Esophagus squamous epithelium (tissue), 5 donors: ENCODE measurements at regions of chr1 and their contacts with region 1.

Region 1: GRCh38 chr1:151130987-151131586 is 15.3 kb downstream of the SEMA6C start:
- DNase-seq: peak; percentile 39
- H3K4me3 ChIP-seq: peak overlapping the region; percentile 30 to 61 (median 49)
- H3K27ac ChIP-seq: peak overlapping the region; percentile 43 to 74 (median 64)
- H3K4me1 ChIP-seq: peaks cover 0 to 27% (median 16%) of the 10 kb centered on the region in 3 donors
- H3K27me3 ChIP-seq: no peaks in the 10 kb centered on the region
- CTCF ChIP-seq: no peak
- POLR2A ChIP-seq: peak in 2 of 4 donors; percentile 11 to 18

Region 2: DNA sequence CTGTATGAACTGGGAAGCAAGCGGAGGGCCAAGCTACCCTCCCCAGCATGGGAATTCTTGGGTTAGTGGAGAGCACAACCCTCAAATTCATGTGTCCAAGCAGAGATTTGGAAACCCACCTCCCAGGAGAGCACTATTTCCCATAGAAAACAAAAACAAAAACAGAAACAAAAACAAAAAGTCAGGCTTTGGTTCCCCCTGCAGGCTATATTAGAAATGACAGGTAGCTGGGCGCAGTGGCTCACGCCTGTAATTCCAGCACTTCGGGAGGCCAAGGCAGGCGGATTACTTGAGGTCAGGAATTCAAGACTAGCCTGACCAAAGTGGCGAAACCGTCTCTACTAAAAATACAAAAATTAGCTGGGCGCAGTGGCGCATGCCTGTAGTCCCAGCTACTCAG is 135.2 kb before region 1 on chr1:
- intact Hi-C with region 1: no loop called
- DNase-seq: no peak
- H3K4me3 ChIP-seq: peak overlapping the region in 1 of 4 donors; percentile 32
- H3K27ac ChIP-seq: peak overlapping the region in 3 of 4 donors; percentile 30 to 47 (median 40)
- H3K4me1 ChIP-seq: peaks cover 6 to 9% (median 6%) of the 10 kb centered on the region in 3 donors
- H3K27me3 ChIP-seq: no peaks in the 10 kb centered on the region
- CTCF ChIP-seq: peak; percentile 65 to 86 (median 82)
- POLR2A ChIP-seq: no peak

Region 3: DNA sequence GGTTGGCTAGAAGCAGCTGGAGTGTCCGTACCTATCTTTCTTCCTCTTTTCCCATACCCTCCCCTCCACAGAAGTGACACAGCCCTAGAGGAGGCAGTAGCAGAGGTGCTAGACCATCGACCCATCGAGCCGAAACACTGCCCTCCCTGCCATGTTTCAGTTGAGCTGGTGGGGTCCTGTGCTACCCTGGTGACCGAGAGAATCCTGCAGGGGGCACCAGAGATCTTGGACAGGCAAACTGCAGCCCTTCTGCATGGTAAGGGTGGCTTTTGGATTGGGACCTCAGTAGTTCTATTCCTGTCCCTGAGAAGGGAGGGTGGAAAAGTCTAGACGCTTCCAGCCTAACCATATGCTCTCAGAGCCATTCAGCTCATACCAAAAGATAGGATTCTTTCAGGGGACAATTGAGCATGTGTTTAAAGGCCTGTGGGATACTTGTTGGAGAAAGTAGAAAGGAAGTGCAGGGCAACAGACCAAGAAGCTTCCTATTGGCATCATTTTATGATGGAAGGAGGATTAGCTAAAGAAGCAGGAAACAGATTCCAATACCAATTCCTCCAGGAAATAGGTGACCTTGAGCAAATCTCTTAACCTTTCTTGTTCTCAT is 106.4 kb before region 1 on chr1:
- intact Hi-C with region 1: loop called (anchors 10 kb)
- DNase-seq: no peak
- H3K4me3 ChIP-seq: no peak overlapping the region
- H3K27ac ChIP-seq: peak overlapping the region in 1 of 4 donors; percentile 30
- H3K4me1 ChIP-seq: peaks cover 0 to 8% (median 3%) of the 10 kb centered on the region in 3 donors
- H3K27me3 ChIP-seq: no peaks in the 10 kb centered on the region
- CTCF ChIP-seq: peak; percentile 69 to 85 (median 76)
- POLR2A ChIP-seq: no peak

Region 4: DNA sequence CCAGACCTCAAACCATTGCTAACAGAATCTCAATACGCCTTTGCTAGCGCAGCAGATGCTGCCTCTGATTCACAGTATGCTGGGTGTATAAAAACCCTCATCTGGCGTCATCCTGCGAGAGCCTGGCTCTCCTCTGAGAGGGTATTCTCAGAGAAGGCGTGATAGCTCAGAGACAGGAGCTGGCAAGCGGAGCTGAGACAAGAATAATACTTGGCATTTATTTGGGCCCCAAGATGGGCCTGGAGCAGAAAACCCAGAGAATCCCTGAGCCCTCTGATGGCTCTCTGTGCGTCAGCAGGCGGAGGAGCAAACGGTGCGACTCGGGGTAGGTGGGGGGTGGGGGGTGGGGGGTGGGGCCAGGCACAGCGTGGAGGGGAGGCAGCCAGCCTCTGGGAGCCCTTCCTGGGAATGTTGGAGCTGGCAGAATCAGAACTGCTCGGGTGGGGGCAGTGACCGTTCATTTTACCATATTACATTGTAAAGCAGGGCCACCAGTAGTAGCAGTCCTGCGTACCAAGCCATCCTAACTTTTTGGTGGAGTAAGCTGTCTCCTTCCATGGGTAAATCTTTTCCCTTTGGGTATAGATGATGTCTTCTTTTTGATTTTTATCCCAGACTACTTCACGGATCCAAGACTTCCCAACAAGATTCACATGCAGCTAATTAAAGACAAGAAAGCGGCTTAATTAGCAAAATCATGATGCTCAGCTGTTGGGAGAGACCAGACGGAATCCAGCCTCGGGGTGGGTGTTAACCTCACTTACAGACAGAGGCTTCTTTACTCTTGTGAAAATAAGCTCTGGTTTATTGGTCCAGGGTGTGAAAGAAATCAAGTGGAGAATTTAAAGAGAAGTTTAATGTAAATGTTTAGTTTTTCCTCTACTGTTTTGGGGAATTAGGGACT is 597.3 kb after region 1 on chr1:
- intact Hi-C with region 1: no loop called
- DNase-seq: no peak
- H3K4me3 ChIP-seq: peak overlapping the region in 1 of 4 donors; percentile 46
- H3K27ac ChIP-seq: peak overlapping the region in 3 of 4 donors; percentile 55 to 68 (median 67)
- H3K4me1 ChIP-seq: peaks cover 0 to 14% (median 0%) of the 10 kb centered on the region in 3 donors
- H3K27me3 ChIP-seq: peaks cover 0 to 44% (median 0%) of the 10 kb centered on the region in 4 donors
- CTCF ChIP-seq: no peak
- POLR2A ChIP-seq: no peak